ENCODE measurements at regions of chr6 and their contacts with region 1.

Region 1: DNA sequence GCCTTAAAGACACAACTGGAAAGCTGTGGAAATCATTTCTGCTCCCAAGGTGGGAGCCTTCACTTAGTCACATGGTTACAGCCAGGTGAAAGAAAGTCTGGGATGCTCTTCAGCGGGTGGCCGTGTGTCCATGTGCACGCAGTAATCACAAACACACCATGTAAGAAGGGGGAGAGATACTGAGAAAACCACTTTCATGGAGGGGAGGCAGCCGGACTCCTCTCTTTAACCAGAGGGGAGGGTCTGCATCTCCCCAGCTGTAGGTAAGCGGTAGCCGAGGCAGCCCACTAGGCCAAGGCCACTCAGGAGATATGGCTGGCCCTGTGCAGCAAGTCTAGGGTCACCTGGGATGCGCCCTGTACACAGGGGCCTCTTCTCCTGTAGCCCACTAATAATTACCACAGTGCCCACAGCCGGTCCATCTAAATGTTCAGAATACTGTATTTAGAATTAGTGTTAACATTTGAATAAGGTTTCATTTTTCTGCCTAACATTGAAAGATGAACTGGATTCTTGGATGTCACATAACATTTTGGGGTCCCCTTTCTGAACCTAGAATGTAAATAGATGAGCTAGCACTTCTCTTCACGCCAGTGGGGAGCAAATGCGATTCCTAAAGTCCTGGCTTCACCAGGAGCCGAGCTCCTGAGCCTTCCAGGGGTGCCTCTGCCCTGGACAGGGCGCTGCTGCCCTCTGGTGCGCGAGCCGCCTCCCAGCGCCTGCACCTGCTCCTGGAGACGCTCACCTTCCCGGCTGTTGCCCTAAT is 15.9 kb downstream of the GPR31 start:
- DNase-seq: peak; percentile 71 to 79 (median 75)
- ATAC-seq: peak; percentile 96 to 99 (median 98)
- H3K4me3 ChIP-seq: no peak overlapping the region
- H3K27ac ChIP-seq: no peak overlapping the region
- H3K4me1 ChIP-seq: peaks cover 0 to 4% (median 0%) of the 10 kb centered on the region in 4 donors
- H3K27me3 ChIP-seq: no peaks in the 10 kb centered on the region
- CTCF ChIP-seq: peak; percentile 77 to 94 (median 90)
- POLR2A ChIP-seq: no peak

Region 2: GRCh38 chr6:166775180-166776081 is 366.4 kb before region 1 on chr6:
- intact Hi-C with region 1: loop called (anchors 10 kb)
- DNase-seq: peak in 1 of 3 donors; percentile 45
- ATAC-seq: peak; percentile 70 to 83 (median 78)
- H3K4me3 ChIP-seq: no peak overlapping the region
- H3K27ac ChIP-seq: no peak overlapping the region
- H3K4me1 ChIP-seq: no peaks in the 10 kb centered on the region
- H3K27me3 ChIP-seq: no peaks in the 10 kb centered on the region
- CTCF ChIP-seq: peak; percentile 61 to 82 (median 80)
- POLR2A ChIP-seq: no peak

Region 3: GRCh38 chr6:166786704-166787293 is 355.1 kb before region 1 on chr6:
- intact Hi-C with region 1: loop called in 1 of 2 experiments (anchors 10 kb)
- DNase-seq: no peak
- ATAC-seq: peak; percentile 83 to 90 (median 86)
- H3K4me3 ChIP-seq: no peak overlapping the region
- H3K27ac ChIP-seq: no peak overlapping the region
- H3K4me1 ChIP-seq: no peaks in the 10 kb centered on the region
- H3K27me3 ChIP-seq: no peaks in the 10 kb centered on the region
- CTCF ChIP-seq: peak; percentile 68 to 75 (median 74)
- POLR2A ChIP-seq: no peak

Measured in right lobe of liver (tissue), 6 donors.